Caco-2 (cell line): ENCODE measurements at regions of chr2 and their contacts with region 1.

Region 1: DNA sequence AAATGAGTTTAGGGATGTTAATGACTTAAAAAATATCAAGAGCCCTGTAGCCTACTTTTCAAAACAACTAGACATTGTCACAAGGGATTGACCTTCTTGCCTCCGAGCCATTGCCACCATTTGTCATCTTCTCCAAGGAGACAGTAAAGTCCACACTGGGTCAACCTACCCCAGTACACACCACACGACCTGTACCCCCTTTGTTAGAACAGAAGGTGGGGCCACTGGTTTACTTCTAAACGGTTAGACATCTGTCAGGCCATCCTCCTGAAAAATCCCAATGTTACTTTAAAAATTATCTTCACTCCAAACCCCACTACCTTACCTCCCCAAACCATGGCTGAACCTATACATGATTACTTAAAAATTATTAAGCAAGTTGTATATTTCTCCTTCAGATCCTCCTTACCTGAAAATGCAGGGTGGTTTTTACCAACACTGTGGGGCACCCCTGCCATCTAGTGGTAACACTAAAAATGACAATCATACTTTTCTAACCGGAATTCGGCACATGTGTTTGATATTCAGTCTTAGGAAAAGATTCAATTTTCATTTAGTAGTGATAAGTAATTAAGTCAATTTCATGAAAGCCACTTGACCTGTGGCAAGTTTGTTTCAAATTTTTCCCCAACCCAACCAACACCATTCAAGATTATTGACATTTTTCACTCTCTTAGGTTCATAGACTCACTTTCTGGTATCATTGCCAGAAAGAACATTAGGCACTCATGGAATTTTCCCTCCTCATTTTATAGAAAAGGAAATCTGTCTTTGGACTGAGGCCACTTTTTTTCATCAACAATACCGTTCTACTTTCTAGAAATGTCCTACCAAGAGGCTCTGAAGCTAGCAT is 265.3 kb upstream of the PKDCC start:
- DNase-seq: peak in 1 of 2 experiments; percentile 61
- H3K4me3 ChIP-seq: no peak overlapping the region
- H3K4me3 Mint-ChIP-seq: no peak overlapping the region
- H3K27ac Mint-ChIP-seq: no peak overlapping the region
- H3K4me1 ChIP-seq: no peaks in the 10 kb centered on the region
- H3K4me1 Mint-ChIP-seq: peaks cover 6% of the 10 kb centered on the region
- H3K27me3 ChIP-seq: no peaks in the 10 kb centered on the region; the same call in none of the 2 replicates
- H3K27me3 Mint-ChIP-seq: peaks cover 11% of the 10 kb centered on the region
- CTCF ChIP-seq: peak; percentile 78 to 92

Region 2: GRCh38 chr2:39913648-39914461 is 1868.7 kb before region 1 on chr2:
- CTCF ChIA-PET with region 1: no interaction called
- POLR2A ChIA-PET with region 1: no interaction called
- intact Hi-C with region 1: loop called (anchors 5 kb)
- DNase-seq: peak in 1 of 2 experiments; percentile 47
- H3K4me3 ChIP-seq: no peak overlapping the region
- H3K4me3 Mint-ChIP-seq: no peak overlapping the region
- H3K27ac Mint-ChIP-seq: no peak overlapping the region
- H3K4me1 ChIP-seq: no peaks in the 10 kb centered on the region
- H3K4me1 Mint-ChIP-seq: no peaks in the 10 kb centered on the region
- H3K27me3 ChIP-seq: no peaks in the 10 kb centered on the region; the same call in 1 of the 2 replicates
- H3K27me3 Mint-ChIP-seq: peaks cover 20% of the 10 kb centered on the region
- CTCF ChIP-seq: peak; percentile 58 to 72

Region 3: DNA sequence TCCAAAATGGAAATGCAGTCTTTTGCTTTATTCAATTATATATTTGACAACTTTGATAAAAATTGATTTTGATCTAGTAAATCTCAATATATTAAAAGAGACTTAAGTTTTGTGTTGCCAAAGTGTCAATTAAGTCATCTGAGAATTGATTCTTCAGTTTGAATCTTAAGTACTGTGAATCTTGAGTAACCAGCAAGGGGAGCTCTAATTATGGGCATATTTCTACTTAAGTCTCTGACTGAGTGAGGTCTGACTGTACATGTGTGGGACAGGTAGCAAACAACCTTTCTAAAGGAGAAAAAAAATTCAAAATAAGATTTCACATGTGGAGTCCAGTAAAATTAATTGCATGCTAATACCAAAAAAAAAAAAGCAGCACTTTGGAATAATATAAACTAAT is 826.9 kb before region 1 on chr2:
- CTCF ChIA-PET with region 1: no interaction called
- POLR2A ChIA-PET with region 1: no interaction called
- intact Hi-C with region 1: loop called (anchors 1 kb)
- DNase-seq: no peak
- H3K4me3 ChIP-seq: no peak overlapping the region
- H3K4me3 Mint-ChIP-seq: no peak overlapping the region
- H3K27ac Mint-ChIP-seq: no peak overlapping the region
- H3K4me1 ChIP-seq: no peaks in the 10 kb centered on the region
- H3K4me1 Mint-ChIP-seq: no peaks in the 10 kb centered on the region
- H3K27me3 ChIP-seq: no peaks in the 10 kb centered on the region
- H3K27me3 Mint-ChIP-seq: peaks cover 3% of the 10 kb centered on the region
- CTCF ChIP-seq: peak in 1 of 2 experiments; percentile 22

Region 4: DNA sequence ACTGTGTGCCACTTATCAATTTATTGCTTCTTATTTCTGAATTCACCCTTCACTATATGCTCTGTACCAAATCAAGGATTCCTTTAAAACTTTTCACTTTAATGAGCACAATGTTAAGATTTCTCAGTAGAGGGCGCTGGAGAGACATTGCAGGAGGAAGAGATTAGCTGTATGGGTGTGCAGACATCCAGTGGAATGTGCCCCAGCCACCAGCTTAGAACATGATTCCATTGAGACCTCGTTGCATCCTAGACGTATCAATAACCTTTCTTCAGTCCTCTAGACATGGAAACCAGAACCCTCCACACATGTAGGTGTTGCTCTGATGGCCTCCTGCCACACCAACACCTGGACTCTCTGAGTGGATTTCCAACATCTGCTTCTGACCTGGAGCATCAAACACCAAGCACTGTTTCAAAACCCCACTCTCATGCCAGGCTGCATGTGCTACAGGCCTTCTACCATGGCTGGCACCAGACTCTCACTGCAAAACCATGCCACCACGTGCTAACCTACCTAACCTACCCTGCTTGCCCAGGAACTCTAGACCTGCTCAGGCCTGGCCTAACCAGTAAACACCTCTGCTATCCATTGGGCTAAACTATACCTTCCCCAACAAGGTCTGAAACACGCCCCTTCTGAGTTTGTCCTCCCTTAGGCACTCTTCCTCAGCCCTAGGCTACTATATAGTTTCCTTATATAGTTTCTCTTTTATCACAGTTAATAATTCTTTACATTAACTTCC is 367.9 kb before region 1 on chr2:
- CTCF ChIA-PET with region 1: no interaction called
- POLR2A ChIA-PET with region 1: no interaction called
- intact Hi-C with region 1: loop called (anchors 1 kb)
- DNase-seq: peak; percentile 44 to 64
- H3K4me3 ChIP-seq: no peak overlapping the region
- H3K4me3 Mint-ChIP-seq: no peak overlapping the region
- H3K27ac Mint-ChIP-seq: no peak overlapping the region
- H3K4me1 ChIP-seq: no peaks in the 10 kb centered on the region
- H3K4me1 Mint-ChIP-seq: no peaks in the 10 kb centered on the region
- H3K27me3 ChIP-seq: no peaks in the 10 kb centered on the region
- H3K27me3 Mint-ChIP-seq: peaks cover 3% of the 10 kb centered on the region
- CTCF ChIP-seq: peak; percentile 63 to 65

Region 5: GRCh38 chr2:41610501-41611190 is 171.9 kb before region 1 on chr2:
- CTCF ChIA-PET with region 1: no interaction called
- POLR2A ChIA-PET with region 1: no interaction called
- intact Hi-C with region 1: loop called (anchors 10 kb)
- DNase-seq: no peak
- H3K4me3 ChIP-seq: no peak overlapping the region
- H3K4me3 Mint-ChIP-seq: no peak overlapping the region
- H3K27ac Mint-ChIP-seq: no peak overlapping the region
- H3K4me1 ChIP-seq: no peaks in the 10 kb centered on the region
- H3K4me1 Mint-ChIP-seq: no peaks in the 10 kb centered on the region
- H3K27me3 ChIP-seq: no peaks in the 10 kb centered on the region
- H3K27me3 Mint-ChIP-seq: peaks cover 4% of the 10 kb centered on the region
- CTCF ChIP-seq: no peak

Region 6: DNA sequence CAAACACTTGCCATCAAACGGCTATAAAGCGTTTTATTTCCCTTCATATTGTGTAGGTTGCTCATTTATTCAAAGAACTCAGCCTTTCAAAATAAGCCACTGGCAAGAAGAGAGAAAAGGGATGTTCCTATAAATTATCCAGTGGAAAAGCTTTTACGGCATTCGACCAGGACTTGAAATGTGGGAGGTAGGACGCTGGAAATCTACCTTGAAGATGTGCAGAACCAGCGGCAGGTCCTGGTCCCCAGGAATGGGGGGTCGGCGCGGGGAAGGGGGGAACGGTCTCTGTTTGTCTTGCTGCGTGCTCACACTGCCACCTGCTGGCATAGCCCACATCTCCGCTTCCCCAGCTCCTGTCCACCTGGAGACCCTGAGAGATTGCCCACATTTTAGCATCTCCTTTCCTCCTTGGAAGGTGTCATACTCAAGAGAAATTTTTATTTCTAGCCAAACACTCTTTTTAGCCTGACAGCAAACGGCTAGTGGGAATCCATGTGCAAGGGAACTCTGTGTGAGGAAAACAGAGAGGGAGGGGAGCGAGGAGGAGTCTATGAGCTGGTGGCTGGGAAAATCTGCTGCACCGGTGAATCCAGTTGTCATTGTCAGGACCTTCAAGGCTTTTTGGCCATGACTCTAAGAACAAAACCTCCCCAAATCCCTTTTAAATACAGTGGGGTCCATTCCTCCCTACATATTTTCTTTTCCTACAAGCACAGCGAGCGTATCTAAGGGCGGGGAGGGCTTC is 83.7 kb before region 1 on chr2:
- CTCF ChIA-PET with region 1: no interaction called
- POLR2A ChIA-PET with region 1: no interaction called
- intact Hi-C with region 1: loop called (anchors 2 kb)
- DNase-seq: peak in 1 of 2 experiments; percentile 47
- H3K4me3 ChIP-seq: no peak overlapping the region
- H3K4me3 Mint-ChIP-seq: no peak overlapping the region
- H3K27ac Mint-ChIP-seq: no peak overlapping the region
- H3K4me1 ChIP-seq: no peaks in the 10 kb centered on the region
- H3K4me1 Mint-ChIP-seq: no peaks in the 10 kb centered on the region
- H3K27me3 ChIP-seq: peaks cover under 1% of the 10 kb centered on the region; the same call in 1 of the 2 replicates
- H3K27me3 Mint-ChIP-seq: peaks cover 19% of the 10 kb centered on the region
- CTCF ChIP-seq: peak; percentile 83 to 84

Region 7: DNA sequence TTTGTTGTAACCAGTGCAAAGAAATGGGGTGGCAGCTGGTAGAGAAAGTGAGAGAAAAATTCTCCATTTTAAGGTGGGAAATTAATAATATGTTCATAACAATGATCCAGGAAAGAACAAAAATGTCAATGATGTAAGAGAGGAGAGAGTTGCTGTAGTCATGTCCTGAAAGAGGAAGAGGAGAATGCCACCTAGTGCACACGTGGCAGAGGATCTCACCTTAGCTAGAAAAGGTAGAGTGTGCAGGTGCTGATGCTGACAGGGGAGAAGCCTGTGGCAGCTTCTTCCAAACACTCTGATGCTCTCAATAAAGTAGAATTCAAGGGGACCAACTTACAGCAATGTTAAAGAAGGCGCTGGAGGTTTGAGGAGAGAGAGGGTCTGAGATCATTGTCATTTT is 17.6 kb before region 1 on chr2:
- CTCF ChIA-PET with region 1: interaction called, 3 read pairs
- POLR2A ChIA-PET with region 1: no interaction called
- intact Hi-C with region 1: loop called (anchors 1 kb)
- DNase-seq: no peak
- H3K4me3 ChIP-seq: no peak overlapping the region
- H3K4me3 Mint-ChIP-seq: no peak overlapping the region
- H3K27ac Mint-ChIP-seq: no peak overlapping the region
- H3K4me1 ChIP-seq: no peaks in the 10 kb centered on the region
- H3K4me1 Mint-ChIP-seq: no peaks in the 10 kb centered on the region
- H3K27me3 ChIP-seq: no peaks in the 10 kb centered on the region; the same call in 1 of the 2 replicates
- H3K27me3 Mint-ChIP-seq: peaks cover 12% of the 10 kb centered on the region
- CTCF ChIP-seq: no peak